PC-3 (cell line): ENCODE measurements at regions of chr1 and their contacts with region 1.

Region 1: DNA sequence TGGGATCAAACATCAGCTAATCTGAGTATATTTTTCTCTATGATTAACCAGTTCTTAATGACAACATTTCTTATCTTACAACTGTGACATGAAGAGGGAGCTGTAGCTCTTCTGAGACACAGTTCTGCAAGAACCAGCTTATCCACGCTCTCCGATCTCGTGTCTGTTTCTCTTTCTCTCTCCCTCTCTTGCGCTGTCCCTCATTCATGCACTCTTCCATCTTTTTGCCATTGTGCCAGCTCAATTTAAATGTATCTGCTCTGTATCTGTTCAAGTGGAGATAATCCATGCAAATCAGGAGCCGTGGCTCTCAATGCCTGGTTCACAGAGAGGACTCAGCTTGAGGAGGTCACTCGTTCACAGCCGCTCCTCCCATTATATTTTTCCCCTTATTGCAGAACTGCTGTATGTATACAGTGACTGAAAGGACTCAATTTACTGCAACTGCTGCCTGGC is 494.7 kb upstream of the ADGRL2 start:
- DNase-seq: peak; percentile 38
- ATAC-seq: peak; percentile 87
- H3K4me3 ChIP-seq: peak overlapping the region; percentile 62
- H3K27ac ChIP-seq: no peak overlapping the region
- H3K4me1 ChIP-seq: peaks cover 6% of the 10 kb centered on the region; the same call in 1 of the 2 replicates
- H3K27me3 ChIP-seq: peaks cover 29% of the 10 kb centered on the region
- CTCF ChIP-seq: peak; percentile 48; the same call in 1 of the 2 replicates

Region 2: DNA sequence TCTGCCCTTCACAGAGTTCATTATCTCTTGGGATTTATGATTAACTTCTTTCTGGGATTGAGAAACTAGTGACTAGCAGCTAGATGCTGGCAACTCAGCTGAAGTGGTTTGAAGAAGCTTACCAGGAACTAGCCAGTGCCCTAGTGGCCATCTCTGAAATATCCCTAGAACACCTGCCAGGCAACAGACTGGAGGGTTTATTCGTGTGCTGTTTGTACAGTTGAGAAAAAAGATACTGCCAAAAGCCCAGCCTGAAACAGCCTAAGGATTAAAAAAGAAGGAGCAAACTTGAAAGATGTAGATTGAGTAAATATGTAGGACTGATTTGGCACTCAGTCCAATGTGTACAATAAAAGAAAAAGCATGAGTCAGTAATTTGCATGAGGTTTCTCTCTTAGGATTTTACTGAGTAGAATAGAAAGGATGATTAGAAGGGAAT is 649.9 kb before region 1 on chr1:
- CTCF ChIA-PET with region 1: no interaction called
- POLR2A ChIA-PET with region 1: no interaction called
- intact Hi-C with region 1: loop called (anchors 5 kb)
- DNase-seq: peak; percentile 59
- ATAC-seq: peak; percentile 94
- H3K4me3 ChIP-seq: no peak overlapping the region
- H3K27ac ChIP-seq: peak overlapping the region; percentile 68
- H3K4me1 ChIP-seq: peaks cover 11% of the 10 kb centered on the region; the same call in 1 of the 2 replicates
- H3K27me3 ChIP-seq: no peaks in the 10 kb centered on the region
- CTCF ChIP-seq: peak; percentile 60

Region 3: DNA sequence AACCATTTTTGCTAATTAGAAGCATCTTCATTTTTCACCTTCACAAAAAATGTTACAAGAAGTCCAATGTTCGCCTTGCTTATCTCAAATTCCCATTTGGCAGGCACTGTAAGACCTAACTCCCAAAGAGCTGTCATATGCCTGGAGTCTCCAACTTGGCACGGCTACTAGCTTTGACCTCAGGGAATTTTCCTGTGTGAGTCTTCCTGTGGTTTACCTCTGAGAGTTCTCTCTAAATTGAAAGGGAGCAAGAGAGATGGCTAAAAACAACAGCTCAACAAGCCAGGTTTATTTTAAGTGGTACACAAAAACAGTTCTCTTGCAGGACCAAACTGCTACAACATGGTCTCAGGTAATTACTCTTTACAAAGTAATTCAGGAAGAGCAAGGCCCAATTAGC is 261.3 kb before region 1 on chr1:
- CTCF ChIA-PET with region 1: no interaction called
- POLR2A ChIA-PET with region 1: no interaction called
- intact Hi-C with region 1: loop called (anchors 10 kb)
- DNase-seq: no peak
- ATAC-seq: no peak
- H3K4me3 ChIP-seq: no peak overlapping the region
- H3K27ac ChIP-seq: no peak overlapping the region
- H3K4me1 ChIP-seq: no peaks in the 10 kb centered on the region
- H3K27me3 ChIP-seq: no peaks in the 10 kb centered on the region
- CTCF ChIP-seq: no peak

Region 4: GRCh38 chr1:81549604-81550127 is 243.6 kb after region 1 on chr1:
- CTCF ChIA-PET with region 1: no interaction called
- POLR2A ChIA-PET with region 1: no interaction called
- intact Hi-C with region 1: loop called (anchors 10 kb)
- DNase-seq: peak; percentile 74
- ATAC-seq: peak; percentile 88
- H3K4me3 ChIP-seq: no peak overlapping the region
- H3K27ac ChIP-seq: no peak overlapping the region
- H3K4me1 ChIP-seq: peaks cover 12% of the 10 kb centered on the region
- H3K27me3 ChIP-seq: peaks cover 33% of the 10 kb centered on the region
- CTCF ChIP-seq: peak; percentile 84

Region 5: GRCh38 chr1:81760477-81761097 is 454.6 kb after region 1 on chr1:
- CTCF ChIA-PET with region 1: no interaction called
- POLR2A ChIA-PET with region 1: no interaction called
- intact Hi-C with region 1: loop called (anchors 5 kb)
- DNase-seq: peak; percentile 46
- ATAC-seq: no peak
- H3K4me3 ChIP-seq: no peak overlapping the region
- H3K27ac ChIP-seq: no peak overlapping the region
- H3K4me1 ChIP-seq: no peaks in the 10 kb centered on the region
- H3K27me3 ChIP-seq: no peaks in the 10 kb centered on the region
- CTCF ChIP-seq: peak; percentile 64

Region 6: DNA sequence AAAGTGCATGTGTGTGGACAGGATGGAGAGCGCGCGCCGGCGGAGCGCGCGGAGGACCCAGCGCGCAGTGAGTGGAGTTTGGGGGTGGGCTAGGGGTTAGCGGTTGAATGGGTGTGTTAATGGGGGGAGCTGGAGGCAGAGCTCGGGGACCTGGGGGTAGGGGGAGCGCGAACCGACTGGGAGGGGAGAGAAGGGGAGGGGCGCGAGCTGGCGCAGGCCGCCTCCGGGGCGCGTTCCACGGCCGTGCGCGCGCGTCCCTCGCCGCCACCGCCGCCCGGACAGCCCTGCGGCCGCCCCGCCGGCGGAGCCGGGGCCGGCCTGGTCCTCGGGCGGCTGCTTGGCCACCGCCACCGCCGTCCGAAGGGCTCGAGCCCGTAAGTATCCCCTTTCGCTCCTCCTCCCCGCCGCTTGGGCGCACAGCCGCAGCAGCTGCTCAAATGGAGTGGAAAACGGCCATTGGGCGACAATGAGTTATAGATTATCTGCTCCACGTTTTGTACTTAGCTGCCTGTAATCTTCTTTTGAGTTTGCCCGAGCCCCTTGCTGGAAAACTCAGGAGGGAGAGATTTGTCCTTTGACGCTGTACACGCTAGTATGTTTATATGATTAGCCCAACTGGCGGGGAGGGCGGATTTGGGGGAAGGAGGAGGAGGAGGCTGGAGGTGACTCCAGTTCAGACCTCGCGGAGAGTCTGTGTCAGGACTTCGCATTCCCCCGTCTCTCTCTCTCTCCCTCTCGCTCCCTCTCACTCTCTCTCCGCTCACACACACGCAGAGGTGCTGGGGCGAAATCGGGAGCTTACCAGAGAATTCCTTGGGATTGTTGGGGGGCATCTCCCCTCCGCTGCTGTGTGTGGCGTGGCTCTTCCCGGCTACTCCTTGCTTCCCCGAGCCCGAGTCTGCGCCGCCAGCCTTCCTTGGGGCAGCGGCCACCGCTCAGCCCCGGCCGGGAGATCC is 494.9 kb after region 1 on chr1 and contains the start of gene ADGRL2:
- CTCF ChIA-PET with region 1: no interaction called
- POLR2A ChIA-PET with region 1: no interaction called
- intact Hi-C with region 1: loop called (anchors 10 kb)
- DNase-seq: peak; percentile 43
- ATAC-seq: peak; percentile 73
- H3K4me3 ChIP-seq: peak within 1 kb of the TSS; percentile 49
- H3K27ac ChIP-seq: no peak within 1 kb of the TSS
- H3K4me1 ChIP-seq: peaks cover 4% of the 10 kb centered on the region; the same call in 1 of the 2 replicates
- H3K27me3 ChIP-seq: peaks cover 95% of the 10 kb centered on the region
- CTCF ChIP-seq: no peak
- total RNA-seq, gene ADGRL2: 0.51 and 3.2 TPM in 2 replicates